ENCODE measurements at regions of chrX and their contacts with region 1.

Region 1: DNA sequence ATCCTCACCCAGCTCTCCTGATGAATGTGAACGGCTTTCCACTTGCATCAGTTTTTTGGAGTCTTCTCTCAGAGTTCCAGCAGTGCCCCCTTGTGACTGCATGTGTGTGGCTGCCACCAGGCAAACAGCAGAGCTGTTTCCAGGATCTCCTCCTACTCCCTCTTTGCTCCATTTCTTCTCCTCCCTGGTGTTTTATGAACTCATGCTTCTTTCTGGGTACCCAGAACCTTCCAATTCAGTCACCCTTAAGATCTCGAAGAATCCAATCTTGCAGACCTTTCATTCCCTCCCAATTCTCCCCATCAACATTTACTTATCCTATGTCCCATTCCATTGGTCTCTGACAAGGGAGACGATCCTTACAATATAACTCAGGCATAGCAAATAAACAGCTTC is 6.8 kb upstream of the TCEANC start:
- DNase-seq: no peak
- ATAC-seq: peak; percentile 80
- H3K4me3 ChIP-seq: no peak overlapping the region
- H3K27ac ChIP-seq: no peak overlapping the region
- H3K4me1 ChIP-seq: no peaks in the 10 kb centered on the region
- H3K27me3 ChIP-seq: no peaks in the 10 kb centered on the region; a peak in 1 of 4 replicates
- CTCF ChIP-seq: peak; percentile 67 to 80 (median 76)
- EP300 ChIP-seq: no peak
- POLR2A ChIP-seq: no peak
- RAD21 ChIP-seq: peak; percentile 72

Region 2: DNA sequence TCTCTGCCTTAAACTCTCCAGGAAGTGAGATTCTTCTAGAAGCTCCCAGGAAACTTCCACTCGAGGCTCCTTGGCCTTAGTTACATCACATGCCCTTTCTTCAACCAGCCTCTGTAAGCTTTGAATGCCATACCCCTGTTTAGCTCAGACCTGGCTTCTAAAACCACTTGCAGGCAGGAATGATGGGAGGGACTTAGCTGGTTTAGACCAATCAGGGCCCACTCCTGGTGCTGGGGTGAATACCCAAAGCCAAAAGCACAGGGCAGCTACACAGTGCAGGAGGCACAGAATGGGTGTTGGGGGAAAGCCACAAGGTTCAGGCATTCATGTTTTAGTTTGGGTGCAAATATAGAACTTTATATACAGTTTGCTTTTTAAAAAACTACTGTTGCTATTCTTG is 1211.7 kb before region 1 on chrX:
- CTCF ChIA-PET with region 1: no interaction called
- POLR2A ChIA-PET with region 1: no interaction called
- RAD21 ChIA-PET with region 1: no interaction called
- SMC1A ChIA-PET with region 1: no interaction called
- in situ Hi-C with region 1: no loop called
- intact Hi-C with region 1: no loop called
- DNase-seq: no peak
- ATAC-seq: no peak
- H3K4me3 ChIP-seq: no peak overlapping the region
- H3K27ac ChIP-seq: no peak overlapping the region
- H3K4me1 ChIP-seq: no peaks in the 10 kb centered on the region
- H3K27me3 ChIP-seq: peaks cover 0 to 3% of the 10 kb centered on the region in 2 experiments; a peak in 2 of 4 replicates
- CTCF ChIP-seq: no peak
- EP300 ChIP-seq: no peak
- POLR2A ChIP-seq: no peak
- RAD21 ChIP-seq: no peak

Region 3: GRCh38 chrX:13078739-13079444 is 567.3 kb before region 1 on chrX:
- CTCF ChIA-PET with region 1: no interaction called
- POLR2A ChIA-PET with region 1: no interaction called
- RAD21 ChIA-PET with region 1: no interaction called
- SMC1A ChIA-PET with region 1: no interaction called
- in situ Hi-C with region 1: no loop called
- intact Hi-C with region 1: no loop called
- DNase-seq: no peak
- ATAC-seq: no peak
- H3K4me3 ChIP-seq: no peak overlapping the region
- H3K27ac ChIP-seq: peak overlapping the region; percentile 81
- H3K4me1 ChIP-seq: peaks cover 94% of the 10 kb centered on the region
- H3K27me3 ChIP-seq: no peaks in the 10 kb centered on the region
- CTCF ChIP-seq: no peak
- EP300 ChIP-seq: no peak
- POLR2A ChIP-seq: no peak
- RAD21 ChIP-seq: no peak

Region 4: DNA sequence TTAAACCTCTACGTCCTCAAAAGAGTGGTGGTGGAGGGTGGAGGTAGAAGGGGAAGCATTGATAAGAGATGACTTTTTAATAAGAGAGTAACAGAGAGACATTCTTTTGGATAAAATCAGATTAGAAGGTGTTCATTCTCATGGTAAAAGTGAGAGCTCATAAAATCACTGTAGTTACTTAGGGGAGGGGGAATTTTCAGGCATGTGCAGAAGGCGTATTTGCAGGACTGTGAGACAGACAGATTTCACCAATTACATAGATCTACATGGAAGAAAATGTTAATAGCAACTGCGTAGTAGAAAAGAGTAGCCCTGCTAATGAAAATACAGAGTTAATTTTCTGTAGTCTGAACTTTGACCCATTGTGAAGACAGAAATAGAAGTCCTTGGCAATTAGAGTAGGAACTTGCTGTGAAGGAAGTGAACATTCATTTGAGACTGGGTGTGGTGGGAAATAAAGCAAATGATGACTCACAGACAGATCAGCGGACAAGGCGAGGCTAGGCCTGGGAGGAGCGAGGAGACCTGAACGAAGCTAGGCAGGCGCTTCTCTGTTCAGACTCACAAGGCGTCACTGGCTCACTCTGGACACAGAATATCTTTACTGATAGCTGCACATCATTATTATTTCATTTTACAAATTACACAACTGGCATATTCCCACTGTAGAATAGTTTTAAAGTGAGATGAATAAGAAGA is 544.6 kb before region 1 on chrX:
- CTCF ChIA-PET with region 1: no interaction called
- POLR2A ChIA-PET with region 1: no interaction called
- RAD21 ChIA-PET with region 1: no interaction called
- SMC1A ChIA-PET with region 1: no interaction called
- in situ Hi-C with region 1: loop called (anchors 10 kb)
- intact Hi-C with region 1: no loop called
- DNase-seq: no peak
- ATAC-seq: peak; percentile 57
- H3K4me3 ChIP-seq: no peak overlapping the region
- H3K27ac ChIP-seq: no peak overlapping the region
- H3K4me1 ChIP-seq: no peaks in the 10 kb centered on the region
- H3K27me3 ChIP-seq: no peaks in the 10 kb centered on the region
- CTCF ChIP-seq: no peak
- EP300 ChIP-seq: no peak
- POLR2A ChIP-seq: no peak
- RAD21 ChIP-seq: no peak

Region 5: GRCh38 chrX:13515211-13515930 is 130.8 kb before region 1 on chrX:
- CTCF ChIA-PET with region 1: interaction called, 143 read pairs
- POLR2A ChIA-PET with region 1: no interaction called
- RAD21 ChIA-PET with region 1: interaction called, 17 read pairs
- SMC1A ChIA-PET with region 1: interaction called, 86 read pairs
- in situ Hi-C with region 1: no loop called
- intact Hi-C with region 1: loop called (anchors 5 kb)
- DNase-seq: no peak
- ATAC-seq: no peak
- H3K4me3 ChIP-seq: no peak overlapping the region
- H3K27ac ChIP-seq: no peak overlapping the region
- H3K4me1 ChIP-seq: no peaks in the 10 kb centered on the region
- H3K27me3 ChIP-seq: no peaks in the 10 kb centered on the region
- CTCF ChIP-seq: no peak
- EP300 ChIP-seq: no peak
- POLR2A ChIP-seq: no peak
- RAD21 ChIP-seq: no peak

Region 6: DNA sequence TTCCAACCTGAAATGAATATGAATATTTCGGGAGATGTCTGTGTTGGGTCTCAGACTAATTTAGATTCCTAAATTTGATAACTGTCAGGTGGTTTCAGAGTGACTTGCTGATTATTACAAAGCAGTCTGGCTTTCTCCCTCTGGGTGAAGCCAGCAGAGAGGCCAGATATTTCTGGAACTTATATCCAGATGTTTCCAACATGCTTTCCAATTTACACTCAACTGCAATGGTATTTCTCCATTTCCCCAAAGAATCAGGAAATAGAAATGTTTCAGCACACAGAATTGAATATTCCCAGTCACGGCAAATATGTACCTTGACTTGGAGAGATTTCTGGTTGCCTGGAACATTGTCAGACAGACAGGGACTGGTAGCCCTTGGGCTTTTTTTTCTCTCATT is 125.2 kb before region 1 on chrX:
- CTCF ChIA-PET with region 1: interaction called, 5 read pairs
- POLR2A ChIA-PET with region 1: no interaction called
- RAD21 ChIA-PET with region 1: interaction called, 3 read pairs
- SMC1A ChIA-PET with region 1: interaction called, 3 read pairs
- in situ Hi-C with region 1: no loop called
- intact Hi-C with region 1: loop called (anchors 5 kb)
- DNase-seq: no peak
- ATAC-seq: no peak
- H3K4me3 ChIP-seq: no peak overlapping the region
- H3K27ac ChIP-seq: no peak overlapping the region
- H3K4me1 ChIP-seq: no peaks in the 10 kb centered on the region
- H3K27me3 ChIP-seq: no peaks in the 10 kb centered on the region
- CTCF ChIP-seq: no peak
- EP300 ChIP-seq: no peak
- POLR2A ChIP-seq: no peak
- RAD21 ChIP-seq: no peak

Region 7: GRCh38 chrX:13598877-13599276 is 47.3 kb before region 1 on chrX:
- CTCF ChIA-PET with region 1: interaction called, 10 read pairs
- POLR2A ChIA-PET with region 1: no interaction called
- RAD21 ChIA-PET with region 1: interaction called, 4 read pairs
- SMC1A ChIA-PET with region 1: interaction called, 4 read pairs
- in situ Hi-C with region 1: no loop called
- intact Hi-C with region 1: no loop called
- DNase-seq: no peak
- ATAC-seq: peak; percentile 73
- H3K4me3 ChIP-seq: no peak overlapping the region
- H3K27ac ChIP-seq: no peak overlapping the region
- H3K4me1 ChIP-seq: no peaks in the 10 kb centered on the region
- H3K27me3 ChIP-seq: peaks cover 0 to 4% of the 10 kb centered on the region in 2 experiments; a peak in 2 of 4 replicates
- CTCF ChIP-seq: peak; percentile 9 to 27 (median 20); a peak in 2 of 6 replicates
- EP300 ChIP-seq: no peak
- POLR2A ChIP-seq: no peak
- RAD21 ChIP-seq: no peak

Measured in GM12878 (cell line).